ENCODE measurements at regions of chr18 and their contacts with region 1.

Region 1: DNA sequence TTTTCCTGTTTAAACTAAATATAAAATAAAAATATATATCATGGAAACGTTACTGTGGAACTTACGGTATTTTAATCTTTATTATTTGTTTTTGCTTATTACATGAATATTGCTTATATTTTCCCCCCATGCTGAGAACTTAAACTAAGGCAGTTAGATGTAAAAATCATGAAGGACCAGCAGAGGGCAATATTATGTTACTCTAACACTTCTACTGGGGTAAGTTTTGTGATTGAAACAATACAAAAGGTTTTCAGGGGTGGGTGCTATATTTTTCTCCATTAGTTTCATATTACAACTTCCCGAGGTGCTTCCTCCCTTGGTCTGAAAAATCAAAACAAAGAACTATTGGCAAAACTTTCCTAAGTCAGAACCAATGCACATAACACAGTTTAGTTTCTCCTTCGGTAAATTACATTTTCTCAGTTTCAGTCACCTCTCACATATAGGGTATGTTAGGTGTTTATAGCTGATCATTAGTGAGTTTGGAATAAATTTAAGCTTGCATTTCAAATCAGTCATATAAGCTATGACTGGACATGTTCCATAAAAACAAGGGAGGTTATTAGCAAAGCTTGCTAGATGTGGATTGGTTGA is 54.8 kb downstream of the ZNF407 start:
- DNase-seq: peak in 1 of 2 experiments; percentile 39
- H3K4me3 ChIP-seq: no peak overlapping the region
- H3K4me1 ChIP-seq: peaks cover 2% of the 10 kb centered on the region; the same call in 1 of the 2 replicates
- H3K27me3 ChIP-seq: no peaks in the 10 kb centered on the region

Region 2: GRCh38 chr18:75727456-75727855 is 1075.0 kb after region 1 on chr18:
- in situ Hi-C with region 1: loop called (anchors 25 kb)
- DNase-seq: peak; percentile 3 to 66
- H3K4me3 ChIP-seq: no peak overlapping the region
- H3K4me1 ChIP-seq: no peaks in the 10 kb centered on the region
- H3K27me3 ChIP-seq: no peaks in the 10 kb centered on the region

Measured in HAP-1 (cell line).